ENCODE measurements at regions of chr11 and their contacts with region 1.

Region 1: GRCh38 chr11:125245299-125245698 is 80.7 kb downstream of the PKNOX2 start:
- DNase-seq: peak in 3 of 5 donors; percentile 19 to 64 (median 30)
- H3K4me3 ChIP-seq: no peak overlapping the region
- H3K27ac ChIP-seq: no peak overlapping the region
- H3K4me1 ChIP-seq: peaks cover 10% of the 10 kb centered on the region
- H3K27me3 ChIP-seq: no peaks in the 10 kb centered on the region
- CTCF ChIP-seq: no peak
- EP300 ChIP-seq: no peak
- POLR2A ChIP-seq: no peak

Region 2: DNA sequence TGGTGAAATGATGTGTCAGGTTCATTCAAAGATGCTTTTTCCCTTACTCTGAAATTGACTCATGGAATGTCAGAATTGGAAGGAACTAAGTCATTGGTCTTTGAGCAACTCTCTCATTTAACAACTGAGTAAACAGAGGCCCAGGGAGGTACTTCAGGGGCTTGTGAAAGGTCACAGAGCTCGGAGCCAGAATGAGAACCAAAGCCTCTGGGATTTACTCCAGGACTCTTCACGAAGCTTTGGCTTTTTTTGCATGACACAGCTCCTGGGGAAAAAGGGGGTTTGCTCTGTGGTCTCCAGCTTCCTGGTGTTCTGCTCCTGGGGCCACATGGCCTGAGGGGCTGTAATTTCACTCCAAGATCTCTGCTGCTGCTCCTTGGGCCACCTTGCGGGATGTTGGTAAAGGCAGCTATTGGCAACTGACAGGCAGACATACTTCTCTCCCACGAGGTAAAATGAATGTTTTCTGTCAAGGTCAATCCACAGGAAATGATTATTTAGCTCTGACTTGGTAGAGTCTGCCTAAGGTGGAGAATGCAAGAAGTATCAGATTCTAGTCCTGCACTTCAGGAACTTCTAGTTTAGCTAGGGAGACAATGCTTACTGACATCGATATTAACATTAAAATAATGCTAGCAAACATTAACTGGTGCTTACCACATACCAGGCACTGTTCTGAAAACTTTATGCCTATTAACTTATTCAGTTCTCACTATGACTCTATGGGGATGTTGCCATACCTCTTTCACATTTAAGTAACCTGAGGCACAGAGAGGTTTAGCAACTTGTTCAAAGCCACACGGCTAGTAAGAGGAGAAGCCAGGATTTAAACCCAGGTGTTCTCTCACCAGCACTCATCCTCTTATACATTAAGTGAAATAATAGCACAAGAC is 64.6 kb before region 1 on chr11:
- intact Hi-C with region 1: loop called in 1 of 4 experiments (anchors 2 kb)
- DNase-seq: no peak
- H3K4me3 ChIP-seq: no peak overlapping the region
- H3K27ac ChIP-seq: no peak overlapping the region
- H3K4me1 ChIP-seq: peaks cover 6% of the 10 kb centered on the region
- H3K27me3 ChIP-seq: no peaks in the 10 kb centered on the region
- CTCF ChIP-seq: no peak
- EP300 ChIP-seq: no peak
- POLR2A ChIP-seq: no peak

Region 3: GRCh38 chr11:125267548-125267947 is 22.2 kb after region 1 on chr11:
- intact Hi-C with region 1: loop called in 1 of 4 experiments (anchors 2 kb)
- DNase-seq: no peak
- H3K4me3 ChIP-seq: no peak overlapping the region
- H3K27ac ChIP-seq: no peak overlapping the region
- H3K4me1 ChIP-seq: peaks cover 26% of the 10 kb centered on the region
- H3K27me3 ChIP-seq: no peaks in the 10 kb centered on the region
- CTCF ChIP-seq: no peak
- EP300 ChIP-seq: no peak
- POLR2A ChIP-seq: no peak

Measured in ovary (tissue), 10 donors.